Colonic mucosa (tissue), 4 donors: ENCODE measurements at regions of chr12 and their contacts with region 1.

Region 1: GRCh38 chr12:115998119-115998633 is 279.3 kb downstream of the MED13L start:
- DNase-seq: no peak
- H3K4me3 ChIP-seq: no peak overlapping the region
- H3K27ac ChIP-seq: no peak overlapping the region
- H3K4me1 ChIP-seq: no peaks in the 10 kb centered on the region
- H3K27me3 ChIP-seq: no peaks in the 10 kb centered on the region
- CTCF ChIP-seq: peak; percentile 85

Region 2: DNA sequence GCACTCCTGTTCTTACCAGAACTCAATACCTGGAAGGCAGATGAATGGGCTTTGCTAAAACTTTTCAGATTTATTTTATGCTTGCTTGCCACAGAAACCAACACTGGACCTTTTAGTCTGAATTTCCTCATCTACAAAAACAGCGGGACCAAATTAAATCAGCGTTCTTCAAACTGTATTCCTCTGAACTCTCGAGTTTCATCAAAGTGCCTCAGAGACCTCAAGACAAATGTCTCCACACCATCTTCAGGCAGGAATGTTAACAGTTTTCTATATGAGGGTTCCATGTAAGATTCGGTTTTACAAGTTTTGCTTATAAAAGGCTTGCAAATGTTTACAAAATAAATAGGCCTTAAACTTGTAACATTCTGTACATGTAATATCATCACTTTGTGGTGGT is 204.8 kb after region 1 on chr12:
- intact Hi-C with region 1: no loop called
- DNase-seq: no peak
- H3K4me3 ChIP-seq: no peak overlapping the region
- H3K27ac ChIP-seq: no peak overlapping the region
- H3K4me1 ChIP-seq: no peaks in the 10 kb centered on the region
- H3K27me3 ChIP-seq: no peaks in the 10 kb centered on the region
- CTCF ChIP-seq: no peak

Region 3: DNA sequence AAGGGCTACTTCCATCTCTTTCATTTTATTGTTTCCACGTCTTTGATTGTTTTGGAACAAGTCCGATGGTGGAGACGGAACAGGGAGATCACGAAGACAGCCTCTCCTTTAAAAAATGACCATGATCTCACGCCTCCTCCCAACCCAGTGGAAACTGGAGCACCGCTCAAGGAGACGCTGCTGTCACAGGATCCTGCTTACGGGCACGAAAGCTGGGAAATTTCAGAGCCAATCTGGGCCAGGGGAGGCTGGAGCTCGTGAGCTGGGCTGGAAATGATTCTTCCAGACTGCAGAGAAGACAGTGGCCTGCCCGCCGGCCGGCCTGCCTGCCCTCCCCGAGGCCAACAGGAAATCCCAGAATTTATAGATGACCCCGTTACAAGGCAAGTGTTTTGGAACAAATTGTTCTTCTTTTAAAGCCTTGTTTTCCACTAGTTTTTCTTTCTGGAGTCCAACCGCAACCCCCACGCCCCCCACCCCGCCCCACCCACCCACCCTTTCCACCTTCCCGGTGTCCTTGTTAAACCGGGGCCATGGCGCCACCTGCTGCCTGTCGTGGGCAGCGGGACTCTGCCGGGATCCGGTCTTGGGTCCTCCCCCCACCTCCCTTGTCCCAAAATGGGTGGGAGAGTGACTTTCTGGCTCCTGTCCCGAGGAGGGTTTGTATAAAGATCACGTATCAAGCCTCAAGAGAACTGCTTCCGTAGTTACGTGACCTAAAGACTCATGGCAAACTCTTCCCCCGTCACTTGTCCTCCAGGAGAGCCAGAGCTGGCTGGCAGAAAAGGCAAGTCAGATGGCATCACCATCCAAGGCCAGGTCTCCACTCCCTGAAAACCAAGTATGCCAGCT is 601.3 kb after region 1 on chr12:
- intact Hi-C with region 1: loop called (anchors 5 kb)
- DNase-seq: peak; percentile 89
- H3K4me3 ChIP-seq: peak overlapping the region; percentile 26
- H3K27ac ChIP-seq: no peak overlapping the region
- H3K4me1 ChIP-seq: no peaks in the 10 kb centered on the region
- H3K27me3 ChIP-seq: no peaks in the 10 kb centered on the region
- CTCF ChIP-seq: peak; percentile 67